Posterior vena cava (tissue), 2 donors: ENCODE measurements at regions of chr6 and their contacts with region 1.

Region 1: DNA sequence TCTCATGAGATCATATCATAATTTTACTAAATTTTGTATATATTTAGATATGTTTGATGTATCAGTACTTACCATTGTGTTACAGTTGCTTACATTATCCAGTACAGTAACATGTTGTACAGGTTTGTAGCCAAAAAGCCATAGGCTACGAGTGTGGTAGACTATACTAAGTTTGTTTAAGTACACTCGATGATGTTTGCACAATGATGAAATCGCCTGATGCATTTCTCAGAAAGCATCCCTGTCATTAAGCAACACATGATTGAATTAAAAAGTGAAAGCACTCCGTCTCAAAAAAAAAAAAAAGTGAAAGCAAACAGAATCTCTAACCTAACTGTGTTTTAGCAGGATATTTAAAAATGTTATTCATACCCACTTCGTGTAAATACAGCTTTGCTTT is 104.9 kb upstream of the TFAP2D start:
- DNase-seq: no peak

Region 2: DNA sequence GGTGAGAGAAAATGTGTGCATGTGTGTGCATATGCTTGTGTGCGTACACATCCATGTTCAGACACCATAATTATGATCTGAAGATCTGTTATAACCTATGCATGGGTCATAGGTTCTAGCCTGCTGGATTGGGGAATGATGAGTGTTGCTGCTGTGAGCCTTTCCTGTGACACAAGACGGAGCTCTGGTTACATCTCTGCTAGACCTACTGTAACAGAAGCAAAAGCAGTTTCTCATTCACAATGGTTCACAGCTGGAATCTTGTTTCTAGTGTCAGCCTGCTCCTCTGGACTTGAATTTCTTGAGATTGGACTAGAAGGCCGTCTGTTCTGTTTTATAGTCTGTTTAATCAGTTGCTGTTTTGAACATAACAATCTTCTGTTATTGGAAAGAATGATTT is 684.6 kb before region 1 on chr6:
- intact Hi-C with region 1: no loop called
- DNase-seq: no peak

Region 3: GRCh38 chr6:50889497-50889896 is 281.1 kb after region 1 on chr6:
- intact Hi-C with region 1: no loop called
- DNase-seq: no peak

Region 4: DNA sequence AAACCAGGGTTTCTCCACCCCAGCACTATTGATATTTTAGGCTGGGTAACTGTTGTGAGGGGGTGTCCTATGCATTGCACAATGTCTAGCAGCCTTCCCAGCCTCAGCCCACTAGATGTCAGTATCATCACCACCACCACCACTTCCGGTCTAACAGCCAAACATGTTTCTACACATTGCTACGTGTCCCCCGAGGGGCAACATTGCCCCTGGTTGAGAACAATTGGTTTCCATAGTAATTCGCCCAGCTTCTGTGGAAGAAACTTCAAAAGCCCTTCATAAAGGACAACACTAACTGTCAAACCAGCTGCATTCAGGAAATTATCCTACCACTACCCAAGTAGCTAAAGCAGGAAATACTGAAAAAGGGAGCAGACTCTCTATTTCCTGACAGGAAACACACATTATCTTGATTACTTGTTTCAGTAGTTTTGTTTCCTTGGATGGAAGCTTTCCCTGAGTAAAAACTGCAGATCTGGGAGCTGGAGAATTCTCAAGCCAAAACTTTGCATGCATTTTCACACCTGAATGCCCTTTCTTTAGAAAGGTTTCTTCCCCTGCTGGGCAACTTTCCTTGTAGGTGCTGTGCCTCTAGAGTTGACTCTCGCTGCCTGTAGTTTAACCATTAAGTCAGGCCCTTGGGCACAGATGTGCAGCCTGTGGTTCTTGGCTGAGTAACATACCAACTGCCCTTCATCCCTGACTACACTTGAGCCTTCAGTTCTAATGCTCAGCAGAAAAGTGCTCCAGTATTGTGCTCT is 1455.3 kb after region 1 on chr6:
- intact Hi-C with region 1: loop called in 1 of 2 experiments (anchors 5 kb)
- DNase-seq: no peak